ENCODE measurements at regions of chr9 and their contacts with region 1.

Region 1: GRCh38 chr9:93962561-93963440 is 7.6 kb upstream of the BARX1 start:
- DNase-seq: peak; percentile 48 to 74
- H3K4me3 ChIP-seq: no peak overlapping the region
- H3K27ac ChIP-seq: no peak overlapping the region
- H3K4me1 ChIP-seq: no peaks in the 10 kb centered on the region
- H3K27me3 ChIP-seq: 0 out of 2 replicates have a peak, but pooled peaks cover 2% of the 10 kb centered on the region
- CTCF ChIP-seq: peak; percentile 88

Region 2: GRCh38 chr9:93159601-93160471 is 803.0 kb before region 1 on chr9:
- CTCF ChIA-PET with region 1: no interaction called
- POLR2A ChIA-PET with region 1: no interaction called
- intact Hi-C with region 1: loop called (anchors 5 kb)
- DNase-seq: peak; percentile 60 to 95
- H3K4me3 ChIP-seq: no peak overlapping the region
- H3K27ac ChIP-seq: no peak overlapping the region
- H3K4me1 ChIP-seq: no peaks in the 10 kb centered on the region; the same call in 1 of the 2 replicates
- H3K27me3 ChIP-seq: no peaks in the 10 kb centered on the region
- CTCF ChIP-seq: peak; percentile 98

Region 3: GRCh38 chr9:93682232-93682968 is 280.4 kb before region 1 on chr9:
- CTCF ChIA-PET with region 1: no interaction called
- POLR2A ChIA-PET with region 1: no interaction called
- intact Hi-C with region 1: loop called (anchors 1 kb)
- DNase-seq: peak; percentile 68 to 79
- H3K4me3 ChIP-seq: no peak overlapping the region
- H3K27ac ChIP-seq: no peak overlapping the region
- H3K4me1 ChIP-seq: no peaks in the 10 kb centered on the region
- H3K27me3 ChIP-seq: 0 out of 2 replicates have a peak, but pooled peaks cover 5% of the 10 kb centered on the region
- CTCF ChIP-seq: peak; percentile 89

Region 4: GRCh38 chr9:94139672-94140417 is 177.0 kb after region 1 on chr9:
- CTCF ChIA-PET with region 1: interaction called, 13 read pairs
- POLR2A ChIA-PET with region 1: no interaction called
- intact Hi-C with region 1: no loop called
- DNase-seq: peak in 1 of 2 experiments; percentile 79
- H3K4me3 ChIP-seq: no peak overlapping the region
- H3K27ac ChIP-seq: no peak overlapping the region
- H3K4me1 ChIP-seq: no peaks in the 10 kb centered on the region
- H3K27me3 ChIP-seq: no peaks in the 10 kb centered on the region
- CTCF ChIP-seq: no peak

Region 5: GRCh38 chr9:94639061-94639998 is 676.5 kb after region 1 on chr9 and contains the start of gene FBP1:
- CTCF ChIA-PET with region 1: interaction called, 10 read pairs
- POLR2A ChIA-PET with region 1: no interaction called
- intact Hi-C with region 1: no loop called
- DNase-seq: peak; percentile 44 to 60
- H3K4me3 ChIP-seq: peak within 1 kb of the TSS; percentile 76
- H3K27ac ChIP-seq: peak within 1 kb of the TSS; percentile 84
- H3K4me1 ChIP-seq: peaks cover 49% of the 10 kb centered on the region
- H3K27me3 ChIP-seq: no peaks in the 10 kb centered on the region
- CTCF ChIP-seq: no peak
- total RNA-seq, gene FBP1: 34.9 and 35.0 TPM in 2 replicates

Measured in PC-9 (cell line).